Heart left ventricle (tissue), 16 donors: ENCODE measurements at regions of chr19 and their contacts with region 1.

Region 1: GRCh38 chr19:16659831-16660708 is at the start of gene SMIM7:
- DNase-seq: peak; percentile 98 to 100 (median 99)
- ATAC-seq: peak; percentile 97 to 99 (median 98)
- H3K4me3 ChIP-seq: peak within 1 kb of the TSS; percentile 68 to 90 (median 82)
- H3K27ac ChIP-seq: peak within 1 kb of the TSS; percentile 83 to 96 (median 94)
- H3K4me1 ChIP-seq: peaks cover 6 to 55% (median 32%) of the 10 kb centered on the region in 12 donors
- H3K27me3 ChIP-seq: no peaks in the 10 kb centered on the region
- CTCF ChIP-seq: peak in 7 of 12 donors; percentile 17 to 51 (median 36)
- POLR2A ChIP-seq: peak; percentile 33 to 66
- total RNA-seq, gene SMIM7: 27.1 to 52.6 (median 45.2) TPM

Region 2: DNA sequence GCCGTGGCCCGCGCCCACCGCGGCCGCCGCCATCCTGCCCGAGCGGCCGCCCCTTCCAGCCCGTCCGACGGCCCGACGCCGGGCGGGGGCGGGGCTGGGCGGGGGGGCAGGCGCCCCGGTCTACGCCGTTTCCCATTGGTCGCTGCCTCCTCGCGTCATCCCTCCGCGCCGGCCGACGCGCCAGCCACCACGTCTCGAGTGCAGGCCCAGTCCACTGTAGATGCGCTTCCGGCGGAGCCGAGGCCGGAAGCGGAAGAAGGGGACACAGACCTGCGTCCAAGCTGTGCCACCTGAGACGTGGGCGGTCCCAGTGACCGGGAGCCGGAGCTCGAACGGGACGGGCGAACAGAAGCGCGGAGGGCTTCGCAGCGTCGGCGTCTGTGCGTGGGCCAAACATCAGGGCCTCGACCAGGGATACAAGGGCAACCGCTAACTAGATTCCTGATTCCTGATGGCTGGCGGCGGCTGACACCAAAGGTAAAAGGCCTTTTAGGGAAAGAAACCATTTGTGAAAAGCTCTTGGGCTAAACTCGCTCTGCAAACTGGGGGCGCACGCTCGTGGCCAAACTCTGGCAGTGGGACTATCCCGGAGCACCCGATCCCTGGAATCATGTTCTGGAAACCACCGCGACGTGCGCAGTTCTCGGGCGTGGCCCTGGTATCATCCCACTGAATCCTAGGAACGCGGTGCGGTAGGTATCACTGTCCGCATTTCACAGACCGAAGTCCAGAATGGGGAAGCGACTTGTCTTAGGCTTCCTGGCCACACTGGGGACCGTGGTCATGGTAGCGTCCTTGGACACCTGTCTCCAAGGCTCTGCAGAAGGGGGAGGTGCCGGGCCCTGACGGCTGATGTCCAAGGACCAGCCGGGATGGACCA is 87.5 kb before region 1 on chr19 and contains the start of gene SLC35E1:
- intact Hi-C with region 1: loop called in 1 of 10 experiments (anchors 1 kb)
- DNase-seq: peak; percentile 94 to 98 (median 97)
- ATAC-seq: peak; percentile 96 to 99 (median 98)
- H3K4me3 ChIP-seq: peak within 1 kb of the TSS; percentile 69 to 98 (median 85)
- H3K27ac ChIP-seq: peak within 1 kb of the TSS; percentile 35 to 93 (median 86)
- H3K4me1 ChIP-seq: peaks cover 7 to 54% (median 27%) of the 10 kb centered on the region in 12 donors
- H3K27me3 ChIP-seq: no peaks in the 10 kb centered on the region
- CTCF ChIP-seq: no peak
- POLR2A ChIP-seq: peak in 1 of 2 donors; percentile 70
- total RNA-seq, gene SLC35E1: 20.4 to 44.0 (median 24.0) TPM

Region 3: DNA sequence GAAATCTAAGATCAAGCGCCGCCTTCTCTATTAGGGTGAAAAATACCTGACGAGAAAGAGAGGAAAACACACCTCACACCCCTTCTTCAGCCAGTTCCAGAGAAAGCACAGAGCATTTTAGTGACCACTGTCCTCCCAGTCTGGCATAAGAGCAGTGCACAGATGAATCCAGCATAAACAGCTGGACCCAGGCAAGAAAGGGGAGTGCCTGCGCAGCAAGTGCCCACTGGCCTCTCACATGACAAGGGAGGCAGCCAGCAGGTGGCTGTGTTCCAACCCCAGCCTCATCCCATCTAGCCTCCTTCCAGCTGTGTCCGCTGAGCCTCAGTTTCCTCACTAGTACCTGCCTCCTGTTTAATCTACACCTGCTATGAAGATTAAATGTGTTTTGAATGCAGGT is 40.1 kb before region 1 on chr19:
- intact Hi-C with region 1: loop called in 2 of 10 experiments (anchors 5 kb)
- DNase-seq: no peak
- ATAC-seq: no peak
- H3K4me3 ChIP-seq: no peak overlapping the region
- H3K27ac ChIP-seq: peak overlapping the region in 1 of 12 donors; percentile 9
- H3K4me1 ChIP-seq: peaks cover 0 to 91% (median 39%) of the 10 kb centered on the region in 12 donors
- H3K27me3 ChIP-seq: no peaks in the 10 kb centered on the region
- CTCF ChIP-seq: no peak
- POLR2A ChIP-seq: no peak

Region 4: DNA sequence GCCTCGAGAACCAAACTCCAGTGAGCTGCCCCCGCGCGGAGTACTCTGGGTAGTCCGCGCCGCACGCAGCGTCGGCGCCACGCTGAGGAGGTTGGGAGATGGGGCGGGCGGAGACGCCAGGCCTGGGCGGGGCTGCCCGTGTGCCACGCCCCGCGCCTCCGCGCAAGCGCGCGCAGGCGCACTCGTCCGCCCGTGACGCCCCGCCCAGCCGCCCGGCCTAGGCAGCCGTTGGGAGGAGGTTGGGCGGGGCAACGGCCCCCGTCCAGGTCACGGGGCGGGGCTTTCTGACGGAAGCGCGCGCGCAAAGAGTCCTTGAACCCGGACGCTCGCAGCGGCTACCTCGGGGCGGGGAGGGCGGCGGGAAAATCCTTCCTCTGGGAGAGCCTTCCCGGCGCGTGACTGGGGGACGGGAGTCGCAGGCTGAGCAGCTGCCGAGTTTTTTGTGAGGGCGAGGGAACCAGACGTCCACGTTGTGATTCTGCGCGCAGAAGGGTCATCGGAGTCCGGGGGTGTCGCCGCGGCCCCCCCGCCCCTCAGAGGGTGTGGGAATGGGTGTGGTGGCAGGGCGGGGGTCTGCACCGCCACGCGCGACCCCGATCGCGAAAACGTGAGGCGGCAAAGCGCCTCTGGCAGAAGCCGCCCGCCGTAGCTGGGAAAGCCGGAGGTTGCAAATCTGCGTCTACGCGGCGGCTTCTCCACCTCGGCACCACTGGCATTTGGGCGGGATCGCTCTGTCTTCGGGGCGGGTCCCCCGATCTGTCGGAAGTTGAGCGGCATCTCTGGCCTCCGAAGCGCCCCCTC is 31.7 kb before region 1 on chr19 and contains the start of gene MED26:
- intact Hi-C with region 1: loop called in 6 of 10 experiments (anchors 1 to 5 kb)
- DNase-seq: peak; percentile 96 to 98 (median 96)
- ATAC-seq: peak; percentile 93 to 98 (median 95)
- H3K4me3 ChIP-seq: peak within 1 kb of the TSS; percentile 75 to 99 (median 90)
- H3K27ac ChIP-seq: peak within 1 kb of the TSS; percentile 92 to 99 (median 98)
- H3K4me1 ChIP-seq: peaks cover 4 to 59% (median 38%) of the 10 kb centered on the region in 12 donors
- H3K27me3 ChIP-seq: no peaks in the 10 kb centered on the region
- CTCF ChIP-seq: peak in 5 of 12 donors; percentile 6 to 36 (median 26)
- POLR2A ChIP-seq: peak; percentile 18 to 83
- total RNA-seq, gene MED26: 3.6 to 7.5 (median 4.6) TPM

Region 5: DNA sequence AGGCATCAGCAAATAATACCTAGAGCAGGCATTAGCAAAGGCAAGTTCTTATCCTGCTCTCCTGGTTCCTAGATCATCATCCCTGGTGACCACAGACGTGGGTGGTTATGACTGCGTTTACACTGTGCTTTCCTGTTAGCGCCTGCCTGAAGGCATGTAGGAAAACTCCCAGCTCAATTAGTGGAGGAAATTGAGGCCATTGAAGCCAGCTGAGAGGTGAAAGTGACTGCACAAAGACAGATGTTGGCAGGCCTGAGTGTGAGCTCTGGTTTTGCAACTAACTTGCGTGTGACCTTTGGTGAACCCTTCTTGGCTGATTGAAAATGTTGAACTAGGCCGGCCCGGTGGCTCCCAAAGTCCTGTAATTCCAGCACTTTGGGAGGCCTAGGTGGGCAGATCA is 42.0 kb after region 1 on chr19:
- intact Hi-C with region 1: loop called in 1 of 10 experiments (anchors 5 kb)
- DNase-seq: peak in 4 of 5 donors; percentile 57 to 76 (median 64)
- ATAC-seq: peak; percentile 66 to 90 (median 85)
- H3K4me3 ChIP-seq: no peak overlapping the region
- H3K27ac ChIP-seq: peak overlapping the region in 7 of 12 donors; percentile 42 to 67 (median 53)
- H3K4me1 ChIP-seq: peaks cover 0 to 36% (median 12%) of the 10 kb centered on the region in 12 donors
- H3K27me3 ChIP-seq: no peaks in the 10 kb centered on the region
- CTCF ChIP-seq: no peak
- POLR2A ChIP-seq: no peak